PC-3 (cell line): ENCODE measurements at regions of chr7 and their contacts with region 1.

Region 1: DNA sequence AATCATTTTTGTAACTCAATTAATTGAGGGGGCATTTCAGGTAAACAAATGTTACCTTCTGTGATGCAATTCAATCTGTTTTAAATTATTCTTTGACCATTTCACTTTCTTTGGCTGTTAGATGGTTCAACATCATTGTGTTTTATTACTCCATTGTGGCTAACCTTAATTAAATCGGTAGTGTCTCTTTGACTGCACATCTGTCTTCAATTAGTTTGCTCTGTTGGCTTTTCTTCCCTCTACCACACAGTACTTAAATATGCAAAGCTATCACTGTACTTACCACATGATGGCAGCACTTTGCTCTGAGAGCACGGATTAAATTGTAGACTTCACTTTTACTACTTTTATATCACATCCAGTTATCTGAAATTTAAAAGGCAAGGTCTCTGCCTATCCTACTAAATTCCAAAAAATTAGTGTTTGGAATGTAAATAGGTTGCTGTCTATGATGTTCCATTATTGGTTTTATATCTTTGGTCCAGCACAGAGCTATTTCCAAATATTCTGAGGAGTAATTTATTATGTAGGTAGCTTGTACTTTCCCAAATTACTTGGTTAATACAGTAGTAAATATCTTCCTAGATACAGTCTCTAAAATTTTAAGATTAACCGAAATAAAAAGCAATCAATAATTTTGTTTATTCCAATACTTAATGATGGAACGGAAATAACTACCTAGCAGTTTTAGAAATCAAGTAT is 352.0 kb downstream of the PCLO start:
- DNase-seq: peak; percentile 63
- ATAC-seq: peak; percentile 97
- H3K4me3 ChIP-seq: no peak overlapping the region
- H3K27ac ChIP-seq: no peak overlapping the region
- H3K4me1 ChIP-seq: peaks cover 12% of the 10 kb centered on the region
- H3K27me3 ChIP-seq: no peaks in the 10 kb centered on the region
- CTCF ChIP-seq: peak; percentile 83

Region 2: GRCh38 chr7:82740246-82740848 is 70.4 kb before region 1 on chr7:
- CTCF ChIA-PET with region 1: no interaction called
- POLR2A ChIA-PET with region 1: no interaction called
- intact Hi-C with region 1: loop called (anchors 1 kb)
- DNase-seq: peak; percentile 73
- ATAC-seq: peak; percentile 84
- H3K4me3 ChIP-seq: no peak overlapping the region
- H3K27ac ChIP-seq: no peak overlapping the region
- H3K4me1 ChIP-seq: no peaks in the 10 kb centered on the region
- H3K27me3 ChIP-seq: no peaks in the 10 kb centered on the region
- CTCF ChIP-seq: peak; percentile 82

Region 3: DNA sequence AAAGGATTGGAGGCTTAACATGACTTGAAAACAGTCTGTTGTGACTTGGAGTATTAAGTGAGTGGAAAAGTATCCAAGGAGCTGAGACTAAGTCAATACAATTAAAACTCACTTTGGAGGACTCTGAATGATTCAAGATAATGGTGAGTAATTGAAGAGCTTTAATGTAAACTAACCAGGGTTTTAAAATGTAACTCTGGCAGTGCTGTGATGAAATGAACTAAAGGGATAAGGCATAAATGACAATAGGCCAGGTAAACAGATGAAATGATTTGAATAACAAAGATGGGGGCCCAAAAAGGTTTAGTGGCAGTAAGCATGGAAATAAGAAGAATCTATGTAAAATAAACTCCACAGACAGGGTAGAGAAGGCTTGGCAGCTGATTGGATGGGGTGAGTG is 50.6 kb before region 1 on chr7:
- CTCF ChIA-PET with region 1: no interaction called
- POLR2A ChIA-PET with region 1: no interaction called
- intact Hi-C with region 1: no loop called
- DNase-seq: peak; percentile 21
- ATAC-seq: peak; percentile 94
- H3K4me3 ChIP-seq: no peak overlapping the region
- H3K27ac ChIP-seq: no peak overlapping the region
- H3K4me1 ChIP-seq: no peaks in the 10 kb centered on the region; the same call in 1 of the 2 replicates
- H3K27me3 ChIP-seq: no peaks in the 10 kb centered on the region
- CTCF ChIP-seq: no peak

Region 4: DNA sequence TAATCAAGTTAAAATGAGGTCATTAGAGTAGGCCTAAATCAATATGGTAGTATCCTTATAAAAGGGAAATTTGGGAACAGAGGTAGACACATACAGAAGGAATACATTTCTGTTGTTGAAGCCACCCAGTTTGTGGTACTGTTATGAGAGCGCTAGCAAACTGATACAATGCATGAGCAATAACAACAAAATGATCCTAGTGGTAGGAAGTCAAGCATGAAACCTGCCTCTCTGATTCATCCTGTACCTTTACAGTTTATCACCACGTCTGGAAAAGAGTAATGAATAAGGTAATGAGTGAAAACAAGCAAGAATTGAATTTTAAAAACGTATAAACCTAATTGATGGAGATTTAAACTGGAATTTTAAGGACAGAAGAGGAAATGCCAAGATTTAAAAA is 134.8 kb after region 1 on chr7:
- CTCF ChIA-PET with region 1: no interaction called
- POLR2A ChIA-PET with region 1: no interaction called
- intact Hi-C with region 1: loop called (anchors 5 kb)
- DNase-seq: peak; percentile 74
- ATAC-seq: peak; percentile 97
- H3K4me3 ChIP-seq: peak overlapping the region; percentile 34; the same call in 1 of the 2 replicates
- H3K27ac ChIP-seq: peak overlapping the region; percentile 80
- H3K4me1 ChIP-seq: peaks cover 18% of the 10 kb centered on the region
- H3K27me3 ChIP-seq: no peaks in the 10 kb centered on the region
- CTCF ChIP-seq: no peak

Region 5: DNA sequence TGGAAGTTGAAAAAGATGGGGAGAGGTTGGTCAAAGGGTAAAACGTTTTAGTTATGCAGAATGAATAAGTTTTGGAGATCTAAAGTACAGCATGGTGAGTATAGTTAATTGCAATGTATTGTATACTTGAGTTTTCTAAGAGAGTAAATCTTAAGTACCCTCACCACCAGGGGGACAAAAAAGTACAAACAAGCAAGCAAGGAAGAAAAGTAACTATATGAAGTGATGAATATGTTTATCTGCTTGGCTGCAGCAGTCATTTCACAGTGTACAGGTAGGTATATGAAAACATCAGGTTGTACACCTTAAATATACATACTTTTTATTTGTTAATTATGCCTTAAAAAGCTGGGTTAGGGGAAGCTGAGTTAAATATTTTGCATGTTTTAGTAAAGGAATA is 194.7 kb after region 1 on chr7:
- CTCF ChIA-PET with region 1: no interaction called
- POLR2A ChIA-PET with region 1: no interaction called
- intact Hi-C with region 1: loop called (anchors 2 kb)
- DNase-seq: peak; percentile 60
- ATAC-seq: peak; percentile 39; the same call in 1 of the 2 replicates
- H3K4me3 ChIP-seq: no peak overlapping the region
- H3K27ac ChIP-seq: no peak overlapping the region
- H3K4me1 ChIP-seq: peaks cover 19% of the 10 kb centered on the region
- H3K27me3 ChIP-seq: no peaks in the 10 kb centered on the region
- CTCF ChIP-seq: peak; percentile 58

Region 6: GRCh38 chr7:83072576-83073517 is 262.1 kb after region 1 on chr7:
- CTCF ChIA-PET with region 1: interaction called, 12 read pairs
- POLR2A ChIA-PET with region 1: no interaction called
- intact Hi-C with region 1: loop called (anchors 1 kb)
- DNase-seq: peak; percentile 55
- ATAC-seq: peak; percentile 71
- H3K4me3 ChIP-seq: no peak overlapping the region
- H3K27ac ChIP-seq: no peak overlapping the region
- H3K4me1 ChIP-seq: no peaks in the 10 kb centered on the region
- H3K27me3 ChIP-seq: no peaks in the 10 kb centered on the region
- CTCF ChIP-seq: peak; percentile 69

Region 7: GRCh38 chr7:83365746-83366145 is 555.0 kb after region 1 on chr7:
- CTCF ChIA-PET with region 1: no interaction called
- POLR2A ChIA-PET with region 1: no interaction called
- intact Hi-C with region 1: loop called (anchors 1 kb)
- DNase-seq: peak; percentile 19
- ATAC-seq: peak; percentile 43; the same call in 1 of the 2 replicates
- H3K4me3 ChIP-seq: no peak overlapping the region
- H3K27ac ChIP-seq: no peak overlapping the region
- H3K4me1 ChIP-seq: no peaks in the 10 kb centered on the region
- H3K27me3 ChIP-seq: no peaks in the 10 kb centered on the region
- CTCF ChIP-seq: peak; percentile 45; the same call in 1 of the 2 replicates